ENCODE measurements at regions of chr7 and their contacts with region 1.

Region 1: DNA sequence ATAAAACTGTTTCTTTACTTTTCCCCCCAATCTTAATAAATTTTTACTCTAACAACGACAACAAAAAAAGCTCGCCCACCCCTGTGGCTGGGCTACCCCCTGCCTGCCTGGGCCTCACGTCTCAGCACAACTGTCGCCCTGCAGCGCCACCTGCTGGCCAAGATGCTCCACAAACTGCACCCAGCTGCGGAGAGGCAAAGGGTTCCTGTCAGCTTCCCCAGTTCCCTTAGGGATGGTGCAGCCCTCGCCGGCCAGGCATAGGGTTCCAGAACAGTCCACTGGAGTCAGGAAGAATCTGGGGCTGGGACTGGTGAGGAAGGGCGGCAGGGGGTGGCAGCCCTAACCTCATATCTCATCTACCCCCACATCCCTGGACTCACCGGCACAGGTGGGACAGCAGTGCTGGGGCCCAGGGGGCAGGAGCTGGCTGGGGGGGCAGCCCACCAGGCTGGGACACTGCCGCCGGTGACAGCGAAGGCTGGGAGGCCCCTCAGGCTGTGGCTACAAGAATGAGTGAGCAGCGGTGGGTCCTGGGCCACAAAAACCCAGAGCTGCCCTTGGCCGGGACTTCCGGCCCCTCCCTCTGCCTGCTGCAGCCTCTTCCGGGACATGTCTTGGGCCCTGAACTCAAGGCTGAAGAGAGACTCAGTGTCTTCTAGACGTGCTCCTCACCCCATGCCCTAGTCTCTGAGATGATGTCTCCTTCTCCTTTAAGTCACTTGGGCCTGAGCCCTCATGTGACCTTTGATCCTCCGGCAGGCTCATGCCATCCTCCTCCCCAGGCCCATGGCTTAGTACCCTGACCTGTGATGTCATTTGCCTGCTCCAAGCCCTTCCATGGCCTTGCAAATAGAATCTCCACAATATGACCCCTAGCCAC is 21.2 kb downstream of the ATP6V1F start:
- DNase-seq: peak; percentile 69
- H3K4me3 Mint-ChIP-seq: no peak overlapping the region
- H3K27ac Mint-ChIP-seq: no peak overlapping the region
- H3K4me1 Mint-ChIP-seq: no peaks in the 10 kb centered on the region
- H3K27me3 Mint-ChIP-seq: no peaks in the 10 kb centered on the region

Region 2: DNA sequence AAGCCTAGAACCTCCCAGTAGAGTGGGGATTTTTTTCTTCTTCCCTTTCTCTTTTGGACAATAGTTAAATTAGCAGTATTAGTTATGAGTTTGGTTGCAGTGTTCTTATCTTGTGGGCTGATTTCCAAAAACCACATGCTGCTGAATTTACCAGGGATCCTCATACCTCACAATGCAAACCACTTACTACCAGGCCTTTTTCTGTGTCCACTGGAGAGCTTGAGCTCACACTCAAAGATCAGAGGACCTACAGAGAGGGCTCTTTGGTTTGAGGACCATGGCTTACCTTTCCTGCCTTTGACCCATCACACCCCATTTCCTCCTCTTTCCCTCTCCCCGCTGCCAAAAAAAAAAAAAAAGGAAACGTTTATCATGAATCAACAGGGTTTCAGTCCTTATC is 113.6 kb before region 1 on chr7:
- intact Hi-C with region 1: no loop called
- DNase-seq: no peak
- H3K4me3 Mint-ChIP-seq: no peak overlapping the region
- H3K27ac Mint-ChIP-seq: no peak overlapping the region
- H3K4me1 Mint-ChIP-seq: no peaks in the 10 kb centered on the region
- H3K27me3 Mint-ChIP-seq: no peaks in the 10 kb centered on the region

Region 3: GRCh38 chr7:128791121-128791961 is 92.5 kb before region 1 on chr7:
- intact Hi-C with region 1: loop called (anchors 5 kb)
- DNase-seq: peak; percentile 70
- H3K4me3 Mint-ChIP-seq: peak overlapping the region; percentile 78
- H3K27ac Mint-ChIP-seq: no peak overlapping the region
- H3K4me1 Mint-ChIP-seq: peaks cover 4% of the 10 kb centered on the region
- H3K27me3 Mint-ChIP-seq: peaks cover 29% of the 10 kb centered on the region

Region 4: GRCh38 chr7:128841921-128842651 is 41.8 kb before region 1 on chr7:
- intact Hi-C with region 1: loop called (anchors 1 kb)
- DNase-seq: peak; percentile 30
- H3K4me3 Mint-ChIP-seq: no peak overlapping the region
- H3K27ac Mint-ChIP-seq: no peak overlapping the region
- H3K4me1 Mint-ChIP-seq: no peaks in the 10 kb centered on the region
- H3K27me3 Mint-ChIP-seq: no peaks in the 10 kb centered on the region